ENCODE measurements at regions of chr11 and their contacts with region 1.

Region 1: GRCh38 chr11:60939855-60940254 is 12.1 kb downstream of the SLC15A3 start:
- DNase-seq: no peak
- H3K4me3 ChIP-seq: no peak overlapping the region
- H3K27ac ChIP-seq: no peak overlapping the region
- H3K4me1 ChIP-seq: peaks cover 21% of the 10 kb centered on the region
- CTCF ChIP-seq: no peak

Region 2: DNA sequence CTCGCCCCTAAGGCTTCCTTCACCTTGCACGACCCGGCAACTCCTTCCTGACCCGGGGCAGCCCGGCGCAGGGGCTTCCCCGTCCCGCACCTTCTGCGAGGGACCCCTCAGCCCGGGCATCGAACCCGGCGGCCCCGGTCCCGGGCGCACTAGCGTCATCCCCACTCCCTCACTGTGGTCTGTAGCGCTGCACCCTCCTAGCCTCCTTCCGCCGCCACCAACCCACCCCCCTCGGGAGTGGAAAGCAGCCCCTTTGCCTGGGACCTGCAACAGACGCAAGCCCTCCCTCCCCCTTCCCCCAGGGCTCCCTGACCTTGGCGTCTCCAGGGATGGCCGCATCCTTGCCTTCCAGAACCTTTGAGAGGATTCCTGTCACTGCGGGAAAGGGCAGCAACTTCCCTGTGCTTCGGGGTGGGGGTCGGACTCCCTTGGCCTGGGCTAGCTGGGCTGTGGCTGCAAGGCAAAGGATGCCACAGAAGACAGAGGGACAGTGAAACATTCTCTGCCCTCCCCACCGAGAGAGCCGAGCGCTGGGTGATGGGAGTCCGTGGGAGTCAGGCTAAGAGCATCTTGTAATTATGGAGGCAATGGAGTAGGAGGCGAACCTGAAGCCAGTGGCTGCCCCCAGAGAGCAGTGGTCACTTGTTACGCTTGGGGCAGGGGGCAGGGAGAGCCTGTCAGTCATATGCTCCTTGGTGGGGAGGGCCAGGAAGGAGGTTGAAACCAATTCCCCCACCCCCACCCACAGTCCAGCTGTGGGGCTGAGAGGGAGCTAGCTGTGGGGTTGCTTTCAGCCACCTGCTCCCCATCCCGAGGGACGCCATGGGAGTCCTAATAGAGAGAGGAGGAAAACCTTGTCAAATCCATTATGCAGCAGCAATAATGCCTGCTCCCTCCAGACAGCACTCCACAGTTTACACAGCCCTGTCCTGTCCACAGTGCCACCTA is 14.7 kb before region 1 on chr11:
- CTCF ChIA-PET with region 1: no interaction called
- POLR2A ChIA-PET with region 1: interaction called, 11 read pairs
- intact Hi-C with region 1: no loop called
- DNase-seq: no peak
- H3K4me3 ChIP-seq: peak overlapping the region; percentile 70
- H3K27ac ChIP-seq: no peak overlapping the region
- H3K4me1 ChIP-seq: peaks cover 28% of the 10 kb centered on the region
- CTCF ChIP-seq: no peak

Region 3: DNA sequence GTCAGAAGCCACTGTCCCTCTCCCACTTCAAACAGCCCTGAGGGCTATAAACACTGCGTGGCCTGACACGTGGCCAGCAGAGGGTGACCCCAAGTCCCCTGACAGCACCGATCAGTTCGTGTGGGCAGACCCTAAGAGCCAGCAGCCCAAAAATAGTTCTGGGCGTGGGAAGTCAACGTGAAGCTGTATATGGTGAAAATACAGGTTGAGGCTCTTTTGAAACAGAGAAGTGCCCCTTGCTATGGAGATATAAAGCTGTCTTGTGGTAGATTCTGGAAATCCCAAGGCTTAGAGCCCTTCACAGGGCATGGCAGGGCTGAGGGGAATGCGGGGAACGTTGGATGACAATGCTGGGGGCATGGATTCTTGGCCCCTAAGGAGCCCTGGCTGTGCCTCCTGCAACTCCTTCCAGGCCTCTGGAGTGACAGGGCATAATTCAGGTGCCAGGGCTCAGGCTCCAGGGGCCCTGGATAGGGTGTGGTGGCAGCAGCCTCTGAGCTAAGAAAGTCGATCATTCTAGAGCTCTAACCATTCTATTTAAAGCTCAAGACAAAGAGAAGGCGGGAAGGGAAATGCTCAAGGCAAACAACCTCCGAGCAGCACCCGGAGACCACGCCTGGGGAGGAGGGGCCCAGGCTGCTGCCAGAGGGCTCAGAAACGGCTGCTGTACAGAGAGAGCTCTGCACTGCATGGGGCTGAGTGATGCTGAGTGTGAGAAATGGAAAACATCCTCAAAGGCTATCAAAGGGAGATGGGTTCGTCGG is 102.1 kb after region 1 on chr11:
- CTCF ChIA-PET with region 1: no interaction called
- POLR2A ChIA-PET with region 1: no interaction called
- intact Hi-C with region 1: no loop called
- DNase-seq: peak; percentile 76
- H3K4me3 ChIP-seq: peak overlapping the region; percentile 4
- H3K27ac ChIP-seq: no peak overlapping the region
- H3K4me1 ChIP-seq: peaks cover 15% of the 10 kb centered on the region
- CTCF ChIP-seq: no peak

Measured in OCI-LY7 (cell line).